ENCODE measurements at regions of chr14 and their contacts with region 1.

Region 1: DNA sequence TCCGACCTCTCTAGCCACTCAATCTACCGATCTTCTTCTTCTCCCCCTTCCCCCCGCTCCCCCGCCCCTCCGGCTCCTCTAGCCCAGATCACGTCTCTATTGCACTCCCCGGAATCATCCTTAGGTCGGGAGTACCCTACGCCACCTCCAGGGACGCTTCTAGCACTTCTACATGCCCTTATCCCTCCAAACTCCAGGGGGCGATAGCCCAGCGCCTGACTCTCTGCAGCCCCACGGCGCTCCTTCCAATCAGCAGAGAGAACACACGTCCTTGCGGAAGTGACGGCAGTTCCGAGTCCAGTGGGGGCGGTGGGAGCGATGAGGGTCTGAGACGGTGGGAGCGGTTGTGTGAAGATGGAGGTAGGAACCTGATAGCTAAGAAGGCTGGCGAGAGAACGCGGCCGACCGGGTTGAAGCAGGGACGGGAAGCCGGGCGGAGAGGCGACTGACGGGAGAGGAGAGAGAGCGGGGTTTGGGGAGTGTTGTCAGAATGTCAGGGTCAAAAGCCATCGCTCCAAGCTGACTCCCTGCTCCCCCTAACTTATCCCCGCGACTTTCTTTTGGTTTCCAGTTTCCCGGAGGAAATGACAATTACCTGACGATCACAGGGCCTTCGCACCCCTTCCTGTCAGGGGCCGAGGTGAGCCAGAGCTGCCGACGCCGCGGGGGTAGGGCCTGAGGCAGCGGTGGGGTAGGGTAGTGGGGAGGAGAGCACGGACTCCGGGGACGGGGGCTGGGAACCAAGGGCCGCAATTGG is at the starts of genes RAB2B and TOX4:
- DNase-seq: peak; percentile 90 to 99
- H3K4me3 ChIP-seq: peak within 1 kb of the TSS; percentile 80 to 86
- H3K27ac ChIP-seq: peak within 1 kb of the TSS; percentile 85 to 90
- H3K4me1 ChIP-seq: peaks cover 4 to 16% of the 10 kb centered on the region in 2 donors
- H3K27me3 ChIP-seq: no peaks in the 10 kb centered on the region
- CTCF ChIP-seq: peak; percentile 97 to 98 (median 98)
- total RNA-seq, gene RAB2B: 19.2 TPM
- total RNA-seq, gene TOX4: 76.7 TPM

Region 2: DNA sequence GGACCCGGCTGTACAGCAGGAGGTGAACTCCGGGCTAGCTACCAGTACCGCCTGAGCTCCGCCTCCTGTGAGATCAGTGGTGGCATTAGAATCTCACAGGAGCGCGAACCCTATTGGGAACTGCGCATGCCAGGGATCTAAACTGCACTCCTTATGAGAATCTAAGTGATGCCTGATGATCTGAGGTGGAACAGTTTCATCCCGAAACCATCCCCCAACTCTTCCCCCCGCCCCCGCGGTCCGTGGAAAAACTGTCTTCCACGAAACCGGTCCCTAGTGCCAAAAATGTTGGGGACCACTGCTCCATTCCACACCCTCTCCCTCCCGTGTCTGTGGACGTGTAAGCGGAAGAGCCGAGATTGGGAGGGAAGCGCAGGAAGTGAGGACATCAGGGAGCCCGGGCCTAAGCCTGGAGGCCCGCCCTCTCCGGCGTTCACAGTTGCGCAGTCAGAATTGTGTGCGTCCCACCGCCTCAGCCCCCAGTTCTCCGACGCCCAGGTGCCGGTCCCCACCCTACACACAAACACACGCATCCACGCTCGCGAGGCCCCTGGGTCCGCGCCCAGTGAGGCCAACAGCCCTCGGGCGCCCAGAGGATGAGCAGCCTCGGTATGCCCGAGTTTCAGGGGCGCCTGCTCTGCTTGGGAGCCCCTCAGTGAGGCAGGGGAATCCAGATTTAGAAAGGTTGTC is 794.5 kb before region 1 on chr14:
- intact Hi-C with region 1: loop called (anchors 2 kb)
- DNase-seq: peak; percentile 80 to 95
- H3K4me3 ChIP-seq: peak overlapping the region; percentile 89 to 94
- H3K27ac ChIP-seq: peak overlapping the region; percentile 100
- H3K4me1 ChIP-seq: peaks cover 13 to 35% of the 10 kb centered on the region in 2 donors
- H3K27me3 ChIP-seq: no peaks in the 10 kb centered on the region
- CTCF ChIP-seq: peak in 2 of 3 experiments; percentile 9 to 37

Region 3: GRCh38 chr14:21383848-21384493 is 93.1 kb before region 1 on chr14 and contains the start of gene SUPT16H:
- intact Hi-C with region 1: loop called (anchors 1 kb)
- DNase-seq: peak; percentile 89 to 98
- H3K4me3 ChIP-seq: peak within 1 kb of the TSS; percentile 63 to 79
- H3K27ac ChIP-seq: peak within 1 kb of the TSS; percentile 88 to 90
- H3K4me1 ChIP-seq: peaks cover 0 to 16% of the 10 kb centered on the region in 2 donors
- H3K27me3 ChIP-seq: no peaks in the 10 kb centered on the region
- CTCF ChIP-seq: no peak
- total RNA-seq, gene SUPT16H: 13.5 TPM

Region 4: GRCh38 chr14:21455911-21456667 is 21.0 kb before region 1 on chr14 and contains the start of gene CHD8:
- intact Hi-C with region 1: loop called (anchors 1 kb)
- DNase-seq: peak; percentile 99 to 100
- H3K4me3 ChIP-seq: peak within 1 kb of the TSS; percentile 86 to 95
- H3K27ac ChIP-seq: peak within 1 kb of the TSS; percentile 97 to 98
- H3K4me1 ChIP-seq: peaks cover 9 to 11% of the 10 kb centered on the region in 2 donors
- H3K27me3 ChIP-seq: no peaks in the 10 kb centered on the region
- CTCF ChIP-seq: peak; percentile 43 to 59 (median 50)
- total RNA-seq, gene CHD8: 96.0 TPM

Region 5: DNA sequence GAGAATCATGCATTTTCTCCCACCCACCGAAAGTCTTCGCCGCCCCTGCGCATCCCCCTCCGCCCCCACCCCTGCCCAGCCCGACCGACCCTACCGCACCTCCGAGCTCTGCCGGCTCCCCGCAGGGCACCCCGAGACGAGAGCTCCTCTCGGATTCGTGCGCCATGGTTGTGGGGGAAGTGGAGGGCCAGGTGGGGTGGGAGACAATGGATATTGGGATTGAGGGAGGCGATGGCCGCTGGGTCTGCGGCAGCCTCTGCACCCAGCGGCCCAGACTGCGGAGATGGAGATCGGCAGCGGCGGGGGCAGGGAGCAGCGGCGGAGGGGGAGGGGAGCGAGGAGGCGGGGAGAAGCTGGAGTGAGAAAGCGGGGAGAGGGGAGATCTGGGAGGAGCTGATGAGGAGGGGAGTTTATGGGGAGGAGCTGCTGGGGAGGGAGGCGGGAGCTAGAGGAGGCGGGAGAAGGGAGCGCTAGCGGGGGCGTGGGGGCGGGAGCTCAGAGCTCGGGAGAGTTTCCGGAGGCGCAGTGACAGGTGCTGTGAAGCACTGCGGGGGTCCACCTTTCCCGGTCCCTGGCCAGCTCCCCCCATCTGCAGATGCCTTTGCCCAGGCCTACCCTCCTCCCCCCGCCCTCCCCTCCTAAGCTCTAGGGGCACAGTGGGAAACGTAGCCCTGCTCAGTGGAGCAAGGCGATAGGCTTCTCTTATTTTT is 49.0 kb after region 1 on chr14 and contains the start of gene SALL2:
- intact Hi-C with region 1: loop called (anchors 1 kb)
- DNase-seq: peak in 1 of 2 donors; percentile 86
- H3K4me3 ChIP-seq: peak within 1 kb of the TSS; percentile 59 to 88
- H3K27ac ChIP-seq: peak within 1 kb of the TSS; percentile 51 to 67
- H3K4me1 ChIP-seq: peaks cover 4 to 6% of the 10 kb centered on the region in 2 donors
- H3K27me3 ChIP-seq: no peaks in the 10 kb centered on the region
- CTCF ChIP-seq: no peak
- total RNA-seq, gene SALL2: 18.0 TPM

Region 6: GRCh38 chr14:22432348-22432976 is 955.4 kb after region 1 on chr14:
- intact Hi-C with region 1: no loop called
- DNase-seq: peak in 1 of 2 donors; percentile 70
- H3K4me3 ChIP-seq: no peak overlapping the region
- H3K27ac ChIP-seq: no peak overlapping the region
- H3K4me1 ChIP-seq: peaks cover 3 to 26% of the 10 kb centered on the region in 2 donors
- H3K27me3 ChIP-seq: no peaks in the 10 kb centered on the region
- CTCF ChIP-seq: no peak

Region 7: DNA sequence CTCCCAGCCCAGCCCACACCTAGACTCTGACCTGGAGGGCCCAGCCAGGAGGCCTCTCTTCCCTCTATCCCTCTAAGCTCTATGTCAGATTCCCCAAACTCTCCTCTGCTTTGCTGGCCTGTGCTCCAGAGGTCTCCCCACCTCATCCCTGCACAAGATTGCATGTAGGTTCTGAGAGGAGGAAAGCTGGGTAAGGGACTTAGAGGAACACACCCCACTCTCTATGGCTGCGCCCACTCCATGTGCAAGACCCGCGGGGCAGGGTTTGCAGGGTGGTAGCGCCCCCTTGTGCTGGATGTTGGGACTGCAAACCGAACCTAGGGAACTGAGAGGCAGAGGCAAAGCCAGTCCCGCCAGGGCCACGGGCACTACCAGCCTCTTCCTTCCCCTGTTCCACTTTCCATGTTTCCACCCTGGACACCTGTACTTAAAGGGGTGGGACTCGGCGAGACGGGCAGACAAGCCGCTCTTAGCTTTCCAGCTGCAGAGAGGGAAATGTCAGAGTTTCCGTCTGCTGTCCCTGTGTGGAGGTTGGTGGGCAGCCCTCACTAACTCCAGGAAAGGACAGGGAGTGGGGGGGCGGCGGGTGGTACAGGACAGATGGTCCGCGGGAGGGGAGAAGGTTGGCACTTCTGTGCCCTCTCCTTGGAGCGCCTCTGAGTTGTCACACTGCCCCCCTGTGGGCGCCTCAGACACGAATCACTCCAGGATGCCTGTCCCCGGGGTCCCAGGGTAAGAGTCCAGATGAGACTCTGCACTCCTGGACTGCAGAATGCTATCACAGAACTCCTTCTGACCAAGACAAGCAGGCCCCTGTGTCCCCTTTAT is 1376.1 kb after region 1 on chr14:
- intact Hi-C with region 1: loop called (anchors 10 kb)
- DNase-seq: peak; percentile 58 to 96
- H3K4me3 ChIP-seq: peak overlapping the region; percentile 42 to 66
- H3K27ac ChIP-seq: peak overlapping the region; percentile 87 to 91
- H3K4me1 ChIP-seq: peaks cover 36 to 43% of the 10 kb centered on the region in 2 donors
- H3K27me3 ChIP-seq: no peaks in the 10 kb centered on the region
- CTCF ChIP-seq: peak; percentile 87 to 95 (median 93)

Measured in ascending aorta (tissue), 2 donors.